Body of pancreas (tissue), 4 donors: ENCODE measurements at regions of chr18 and their contacts with region 1.

Region 1: DNA sequence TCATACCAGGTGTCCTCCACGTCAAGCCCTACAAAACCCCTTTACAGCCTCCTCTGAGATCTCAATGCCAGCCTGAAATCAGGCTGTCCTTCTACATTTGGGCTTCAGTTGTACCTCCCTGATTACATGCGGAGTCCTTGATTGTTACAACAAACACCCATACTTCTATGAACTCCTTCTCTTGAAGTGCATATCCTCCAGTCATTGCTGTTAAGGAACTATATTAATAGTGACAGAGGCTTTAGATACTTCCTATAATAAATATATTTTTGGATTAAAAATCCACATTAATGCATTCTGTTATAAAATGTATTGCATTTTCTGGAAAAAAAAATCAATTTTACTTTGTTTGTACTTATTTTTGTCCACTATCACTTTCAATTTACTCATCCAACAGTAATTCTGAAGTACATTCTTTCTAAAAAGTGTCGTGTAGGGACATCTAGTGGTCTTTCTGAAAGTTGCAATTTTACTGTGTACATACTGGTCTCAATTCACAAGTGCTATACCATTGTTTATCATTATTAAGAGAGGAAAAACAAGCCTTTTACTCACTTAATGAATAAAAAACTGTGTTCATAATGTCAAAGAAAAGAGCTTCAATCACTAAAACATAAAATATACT is 316.4 kb downstream of the DSEL start:
- DNase-seq: no peak
- ATAC-seq: peak; percentile 72
- H3K4me3 ChIP-seq: no peak overlapping the region
- H3K27ac ChIP-seq: no peak overlapping the region
- H3K4me1 ChIP-seq: no peaks in the 10 kb centered on the region
- H3K27me3 ChIP-seq: no peaks in the 10 kb centered on the region
- CTCF ChIP-seq: peak; percentile 29 to 76 (median 67)
- POLR2A ChIP-seq: no peak

Region 2: GRCh38 chr18:65846107-65846506 is 1354.0 kb before region 1 on chr18:
- intact Hi-C with region 1: no loop called
- DNase-seq: no peak
- ATAC-seq: no peak
- H3K4me3 ChIP-seq: no peak overlapping the region
- H3K27ac ChIP-seq: no peak overlapping the region
- H3K4me1 ChIP-seq: no peaks in the 10 kb centered on the region
- H3K27me3 ChIP-seq: no peaks in the 10 kb centered on the region
- CTCF ChIP-seq: no peak
- POLR2A ChIP-seq: no peak

Region 3: GRCh38 chr18:67104700-67105284 is 95.3 kb before region 1 on chr18:
- intact Hi-C with region 1: loop called (anchors 5 kb)
- DNase-seq: peak; percentile 62 to 79 (median 69)
- ATAC-seq: peak; percentile 87
- H3K4me3 ChIP-seq: no peak overlapping the region
- H3K27ac ChIP-seq: no peak overlapping the region
- H3K4me1 ChIP-seq: peaks cover 15% of the 10 kb centered on the region
- H3K27me3 ChIP-seq: no peaks in the 10 kb centered on the region
- CTCF ChIP-seq: peak; percentile 43 to 72 (median 63)
- POLR2A ChIP-seq: no peak

Region 4: DNA sequence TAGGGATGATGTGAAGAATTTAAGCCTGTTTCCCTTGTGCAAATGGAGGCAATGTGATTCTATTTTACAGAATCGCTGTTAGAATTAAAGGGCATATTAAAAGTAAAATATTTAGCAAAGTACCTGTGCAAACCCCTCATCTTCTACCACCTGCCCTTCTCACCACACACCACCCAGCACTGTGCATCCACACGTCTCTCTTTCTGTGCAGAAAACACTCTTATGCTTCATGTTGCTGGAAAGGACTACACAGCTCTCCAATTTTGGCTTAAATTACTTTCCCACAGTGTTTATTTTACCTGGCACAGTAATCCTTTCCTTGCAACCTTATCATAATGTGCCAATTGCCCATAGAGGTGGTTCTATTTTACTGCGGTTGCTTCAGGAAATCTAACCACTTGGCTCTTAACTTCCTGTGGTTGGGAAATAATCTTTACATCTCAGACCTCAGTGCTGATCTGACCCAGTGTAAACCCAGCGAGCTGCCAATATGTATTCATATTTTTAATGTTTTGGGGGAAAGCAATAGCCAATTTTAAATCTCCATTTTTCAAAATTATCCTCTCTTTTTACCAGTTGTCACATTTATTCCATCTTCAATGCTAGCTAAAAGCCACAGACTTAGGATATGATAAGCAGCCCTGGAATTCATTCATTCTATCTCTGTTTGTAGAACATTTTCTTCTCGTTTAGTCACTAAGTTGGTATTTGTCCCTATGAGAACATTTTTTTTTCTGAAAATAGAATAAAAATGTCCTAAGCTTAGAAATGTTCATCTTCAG is 65.5 kb after region 1 on chr18:
- intact Hi-C with region 1: no loop called
- DNase-seq: no peak
- ATAC-seq: no peak
- H3K4me3 ChIP-seq: no peak overlapping the region
- H3K27ac ChIP-seq: no peak overlapping the region
- H3K4me1 ChIP-seq: no peaks in the 10 kb centered on the region
- H3K27me3 ChIP-seq: no peaks in the 10 kb centered on the region
- CTCF ChIP-seq: no peak
- POLR2A ChIP-seq: no peak